WTC11 (cell line): ENCODE measurements at regions of chr14 and their contacts with region 1.

Region 1: DNA sequence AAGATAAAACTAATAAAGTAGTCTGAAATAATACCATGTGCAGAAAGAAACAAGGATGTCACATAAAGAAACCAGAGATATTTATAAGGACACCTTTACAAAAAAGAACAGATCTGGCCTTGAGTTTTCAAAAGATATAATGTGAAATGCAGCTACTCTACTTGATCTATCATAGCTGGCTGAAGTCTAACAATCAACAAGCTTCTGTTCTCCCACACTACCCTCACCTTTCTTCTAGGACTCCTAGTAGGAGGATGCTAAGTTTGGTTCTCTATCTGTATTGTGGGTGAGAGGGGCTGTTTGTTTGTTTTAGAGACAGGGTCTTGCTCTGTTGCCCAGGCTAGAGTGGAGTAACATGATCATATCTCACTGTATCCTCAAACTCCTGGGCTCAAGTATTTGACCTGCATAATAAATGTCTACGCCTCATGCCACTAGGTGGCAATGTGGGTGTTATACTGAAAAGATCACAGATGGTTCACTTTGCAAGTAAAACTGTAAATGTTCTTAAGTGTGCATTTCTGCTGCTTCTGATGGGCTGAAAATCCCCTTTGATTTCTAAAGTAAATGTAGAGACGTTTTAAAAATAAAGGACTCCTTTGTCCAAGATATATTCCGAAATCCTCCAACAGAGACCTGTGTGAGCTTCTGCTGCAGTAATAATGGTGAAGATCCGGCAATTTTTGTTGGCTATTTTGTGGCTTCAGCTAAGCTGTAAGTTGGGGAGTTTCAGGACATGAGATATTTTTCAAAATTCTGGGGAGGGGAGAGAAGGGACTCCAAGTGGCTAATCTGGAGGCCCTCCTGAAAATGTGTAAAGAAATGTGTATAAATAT is 269.3 kb downstream of the DAD1 start:
- DNase-seq: peak; percentile 40
- ATAC-seq: peak; percentile 79
- H3K4me3 Mint-ChIP-seq: no peak overlapping the region
- H3K27ac Mint-ChIP-seq: no peak overlapping the region
- H3K4me1 Mint-ChIP-seq: peaks cover 3% of the 10 kb centered on the region; the same call in 1 of the 2 replicates
- H3K27me3 Mint-ChIP-seq: no peaks in the 10 kb centered on the region
- CTCF ChIP-seq: peak; percentile 31; the same call in 1 of the 2 replicates

Region 2: DNA sequence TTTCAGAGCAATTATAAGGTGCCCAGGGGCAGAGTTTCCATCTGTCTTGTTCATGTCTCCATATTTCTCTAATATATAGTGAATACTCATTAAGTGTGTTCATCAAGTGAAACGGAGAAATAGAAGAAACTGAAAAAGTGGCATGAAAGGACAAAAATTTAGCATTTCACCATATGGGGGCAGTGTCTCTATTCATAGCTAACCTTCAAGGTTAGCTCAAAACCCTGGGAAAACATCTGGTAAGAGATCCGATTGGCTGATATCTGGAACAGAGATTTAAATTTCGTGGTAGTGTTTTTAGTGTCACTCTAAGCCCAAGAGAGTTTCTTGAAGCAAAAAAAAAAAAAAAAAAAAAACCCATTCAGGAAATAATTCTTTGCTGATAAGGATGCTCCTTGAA is 98.2 kb before region 1 on chr14:
- CTCF ChIA-PET with region 1: interaction called, 10 read pairs
- POLR2A ChIA-PET with region 1: no interaction called
- DNase-seq: no peak
- ATAC-seq: no peak
- H3K4me3 Mint-ChIP-seq: no peak overlapping the region
- H3K27ac Mint-ChIP-seq: no peak overlapping the region
- H3K4me1 Mint-ChIP-seq: peaks cover 2% of the 10 kb centered on the region
- H3K27me3 Mint-ChIP-seq: no peaks in the 10 kb centered on the region
- CTCF ChIP-seq: no peak

Region 3: GRCh38 chr14:22271838-22272799 is 47.6 kb before region 1 on chr14:
- CTCF ChIA-PET with region 1: no interaction called
- POLR2A ChIA-PET with region 1: no interaction called
- DNase-seq: no peak
- ATAC-seq: peak; percentile 43
- H3K4me3 Mint-ChIP-seq: no peak overlapping the region
- H3K27ac Mint-ChIP-seq: no peak overlapping the region; the same call in 1 of the 2 replicates
- H3K4me1 Mint-ChIP-seq: peaks cover 11% of the 10 kb centered on the region
- H3K27me3 Mint-ChIP-seq: peaks cover 3% of the 10 kb centered on the region
- CTCF ChIP-seq: no peak

Region 4: GRCh38 chr14:22333422-22334276 is 13.9 kb after region 1 on chr14:
- CTCF ChIA-PET with region 1: interaction called, 16 read pairs
- POLR2A ChIA-PET with region 1: no interaction called
- DNase-seq: no peak
- ATAC-seq: no peak; the same call in 1 of the 2 replicates
- H3K4me3 Mint-ChIP-seq: no peak overlapping the region
- H3K27ac Mint-ChIP-seq: peak overlapping the region; percentile 82
- H3K4me1 Mint-ChIP-seq: peaks cover 28% of the 10 kb centered on the region
- H3K27me3 Mint-ChIP-seq: peaks cover 17% of the 10 kb centered on the region
- CTCF ChIP-seq: no peak

Region 5: DNA sequence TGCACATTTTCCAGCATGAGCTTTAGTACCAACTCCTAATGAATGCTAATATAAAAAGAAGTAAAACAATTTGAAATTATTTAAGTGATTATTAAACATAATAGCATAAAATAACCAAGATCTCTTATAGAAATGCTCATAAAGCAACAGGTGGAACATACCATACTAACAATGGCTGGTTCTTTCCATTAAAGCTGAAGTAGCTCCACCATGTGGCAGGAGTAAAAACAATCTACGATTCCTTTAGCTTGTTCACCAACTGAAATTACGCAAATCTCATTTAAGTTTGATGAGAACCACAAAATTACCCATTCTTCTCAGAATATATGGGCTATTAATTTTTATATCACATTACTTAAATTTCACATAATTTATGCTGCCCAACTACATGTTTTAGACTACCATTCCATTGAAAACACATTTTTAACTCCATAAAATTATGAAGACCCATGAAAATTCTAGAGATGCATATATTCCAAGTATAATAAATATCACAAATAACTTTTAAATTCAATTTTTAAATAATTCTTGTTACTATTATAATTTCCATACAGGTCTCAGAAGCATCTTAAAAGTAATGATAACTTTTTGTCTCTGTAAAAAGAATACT is 55.7 kb after region 1 on chr14:
- CTCF ChIA-PET with region 1: interaction called, 80 read pairs
- POLR2A ChIA-PET with region 1: no interaction called
- DNase-seq: no peak
- ATAC-seq: no peak
- H3K4me3 Mint-ChIP-seq: no peak overlapping the region
- H3K27ac Mint-ChIP-seq: no peak overlapping the region
- H3K4me1 Mint-ChIP-seq: no peaks in the 10 kb centered on the region
- H3K27me3 Mint-ChIP-seq: peaks cover 3% of the 10 kb centered on the region; the same call in 1 of the 2 replicates
- CTCF ChIP-seq: no peak

Region 6: DNA sequence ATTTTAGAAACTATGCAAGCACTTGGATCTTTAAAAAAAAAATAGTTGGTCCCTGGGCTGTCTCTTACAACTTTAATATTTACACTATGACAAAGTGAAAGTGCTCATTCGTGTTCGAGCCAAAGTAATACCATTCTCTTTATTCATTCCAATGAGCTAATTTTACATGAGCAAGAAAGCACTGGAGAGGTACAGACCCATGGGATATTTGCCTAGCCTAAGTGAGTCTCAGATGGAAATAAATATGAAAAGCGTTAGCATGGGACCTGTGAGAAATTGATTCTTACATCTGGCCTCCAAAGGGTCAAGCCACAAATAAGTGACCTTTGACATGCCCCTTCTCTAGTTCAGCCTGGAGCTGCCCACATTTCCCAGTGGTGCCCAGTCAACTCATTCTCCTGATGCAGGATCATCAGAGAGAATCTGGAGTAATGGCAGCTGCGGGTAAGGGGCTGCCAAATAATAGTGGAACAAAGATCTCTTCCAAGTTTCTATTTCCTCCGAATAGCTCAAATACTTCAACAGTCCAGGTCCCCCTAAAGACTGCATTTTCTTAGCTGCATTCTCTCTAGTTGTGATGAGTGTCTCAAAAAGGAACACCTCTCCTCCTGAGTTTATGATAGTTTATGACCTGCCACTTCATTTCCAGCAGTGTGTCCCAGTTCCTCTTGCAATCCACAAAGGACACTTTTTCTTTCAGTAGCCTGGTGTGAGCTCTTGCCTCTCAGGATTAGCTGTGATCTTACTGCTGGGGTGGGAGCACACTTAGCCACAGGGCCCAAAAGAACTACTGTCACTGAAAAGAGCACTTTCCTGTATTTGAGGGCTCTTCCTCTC is 61.0 kb after region 1 on chr14:
- CTCF ChIA-PET with region 1: interaction called, 80 read pairs
- POLR2A ChIA-PET with region 1: no interaction called
- DNase-seq: no peak
- ATAC-seq: no peak
- H3K4me3 Mint-ChIP-seq: no peak overlapping the region
- H3K27ac Mint-ChIP-seq: no peak overlapping the region
- H3K4me1 Mint-ChIP-seq: peaks cover 12% of the 10 kb centered on the region
- H3K27me3 Mint-ChIP-seq: no peaks in the 10 kb centered on the region
- CTCF ChIP-seq: no peak

Region 7: DNA sequence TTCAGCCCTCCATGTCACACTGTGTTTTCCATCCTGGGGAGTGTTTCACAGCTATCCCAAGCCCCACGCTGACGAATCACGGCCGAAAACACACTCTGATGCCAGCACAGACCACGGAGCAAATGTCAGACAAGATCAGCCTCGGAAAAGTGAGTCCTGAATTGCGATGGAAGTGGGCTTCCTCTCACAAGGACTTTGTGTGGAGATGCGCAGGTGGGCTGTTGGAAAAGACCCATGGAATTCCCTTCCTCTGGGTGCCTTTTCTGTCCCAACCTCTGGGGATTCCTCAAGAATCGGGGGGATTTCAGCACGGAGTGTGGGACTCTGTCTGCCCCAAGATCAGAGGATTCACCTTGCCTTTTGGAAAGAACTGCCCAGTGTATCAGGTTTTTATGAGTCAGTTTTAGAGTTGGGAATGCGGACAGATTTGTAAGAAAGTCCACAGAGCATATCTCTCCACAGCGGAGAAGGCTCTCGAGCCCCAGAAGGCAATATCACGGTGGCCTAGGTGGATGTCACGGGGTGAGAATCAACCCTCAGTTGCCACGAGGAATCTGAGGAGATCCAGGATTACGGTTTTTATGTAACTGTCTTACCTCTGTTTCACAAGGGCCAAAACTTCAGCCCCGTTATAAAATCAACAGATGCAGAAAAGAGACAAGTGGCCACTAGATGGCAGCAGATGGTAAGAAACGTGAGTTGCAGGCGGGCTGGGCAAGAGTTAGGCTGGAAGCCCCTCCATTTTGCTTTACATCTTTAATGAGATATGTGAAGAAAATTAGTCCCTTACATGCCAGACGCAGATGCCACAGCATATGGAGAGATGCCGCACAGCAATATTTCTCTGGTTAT is 67.4 kb after region 1 on chr14:
- CTCF ChIA-PET with region 1: interaction called, 11 read pairs
- POLR2A ChIA-PET with region 1: no interaction called
- DNase-seq: peak; percentile 72
- ATAC-seq: peak; percentile 58
- H3K4me3 Mint-ChIP-seq: no peak overlapping the region
- H3K27ac Mint-ChIP-seq: no peak overlapping the region
- H3K4me1 Mint-ChIP-seq: peaks cover 4% of the 10 kb centered on the region
- H3K27me3 Mint-ChIP-seq: no peaks in the 10 kb centered on the region; the same call in 1 of the 2 replicates
- CTCF ChIP-seq: peak; percentile 79